ENCODE measurements at regions of chr1 and their contacts with region 1.

Region 1: DNA sequence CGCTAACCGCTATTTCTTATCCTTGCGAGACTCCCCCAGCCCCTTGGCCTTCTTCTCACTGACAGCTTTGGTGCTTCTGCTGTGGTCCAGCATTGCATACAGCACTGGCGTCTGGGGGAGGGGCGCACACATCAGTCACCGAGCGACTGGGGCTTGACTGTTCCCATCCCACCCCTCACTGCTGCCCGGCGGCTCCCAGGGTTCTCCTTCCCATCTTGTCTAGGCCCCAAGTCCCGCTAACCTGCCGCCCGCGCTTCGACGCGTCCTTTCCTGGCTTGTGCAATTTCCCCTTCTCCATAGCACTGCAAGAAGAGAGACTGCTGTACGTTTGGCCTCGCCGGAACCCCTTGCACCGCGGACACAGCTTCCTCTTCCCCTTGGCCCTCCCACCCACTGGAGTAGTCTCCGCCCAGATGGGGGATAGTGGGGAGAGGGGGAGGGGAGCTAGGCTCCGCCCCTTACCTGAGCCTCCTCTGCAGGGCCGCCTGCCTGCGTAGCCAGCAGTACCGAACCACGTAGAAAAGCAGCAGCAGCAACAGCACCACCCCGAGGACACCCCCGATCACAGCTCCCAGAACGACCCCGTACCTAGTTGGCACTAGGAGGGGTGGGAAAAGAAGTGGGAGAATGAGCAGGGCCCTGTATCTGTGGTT is 3.8 kb downstream of the MPZ start:
- DNase-seq: peak; percentile 77 to 96 (median 91)
- ATAC-seq: peak; percentile 95 to 97
- H3K4me3 Mint-ChIP-seq: peak overlapping the region; percentile 92 to 100 (median 98)
- H3K27ac Mint-ChIP-seq: peak overlapping the region; percentile 90 to 99 (median 96)
- H3K4me1 Mint-ChIP-seq: peaks cover 14 to 44% (median 37%) of the 10 kb centered on the region in 4 donors
- H3K27me3 Mint-ChIP-seq: no peaks in the 10 kb centered on the region

Region 2: DNA sequence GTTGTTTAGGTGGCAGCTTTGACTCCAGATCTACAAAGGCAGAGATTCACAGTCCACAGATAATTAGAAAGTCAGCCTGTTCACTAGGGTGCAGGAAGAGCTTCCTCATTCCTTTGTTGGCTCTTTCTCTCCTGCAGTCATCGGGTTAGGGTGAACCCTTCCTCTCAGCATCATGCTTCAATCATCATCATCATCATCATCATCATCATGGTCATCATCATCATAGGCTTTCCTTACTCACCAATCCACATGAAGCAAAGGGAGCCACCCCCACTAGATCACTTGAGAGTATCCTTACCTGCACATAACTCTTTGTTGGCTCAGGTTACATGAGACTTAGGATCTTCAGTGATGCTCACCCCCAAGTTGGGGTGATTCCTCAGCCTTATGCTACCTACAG is 15.2 kb before region 1 on chr1:
- POLR2A ChIA-PET with region 1: interaction called, 15 read pairs
- DNase-seq: no peak
- ATAC-seq: no peak
- H3K4me3 Mint-ChIP-seq: no peak overlapping the region
- H3K27ac Mint-ChIP-seq: peak overlapping the region in 1 of 10 donors; percentile 60
- H3K4me1 Mint-ChIP-seq: peaks cover 2 to 6% (median 4%) of the 10 kb centered on the region in 4 donors
- H3K27me3 Mint-ChIP-seq: no peaks in the 10 kb centered on the region

Region 3: DNA sequence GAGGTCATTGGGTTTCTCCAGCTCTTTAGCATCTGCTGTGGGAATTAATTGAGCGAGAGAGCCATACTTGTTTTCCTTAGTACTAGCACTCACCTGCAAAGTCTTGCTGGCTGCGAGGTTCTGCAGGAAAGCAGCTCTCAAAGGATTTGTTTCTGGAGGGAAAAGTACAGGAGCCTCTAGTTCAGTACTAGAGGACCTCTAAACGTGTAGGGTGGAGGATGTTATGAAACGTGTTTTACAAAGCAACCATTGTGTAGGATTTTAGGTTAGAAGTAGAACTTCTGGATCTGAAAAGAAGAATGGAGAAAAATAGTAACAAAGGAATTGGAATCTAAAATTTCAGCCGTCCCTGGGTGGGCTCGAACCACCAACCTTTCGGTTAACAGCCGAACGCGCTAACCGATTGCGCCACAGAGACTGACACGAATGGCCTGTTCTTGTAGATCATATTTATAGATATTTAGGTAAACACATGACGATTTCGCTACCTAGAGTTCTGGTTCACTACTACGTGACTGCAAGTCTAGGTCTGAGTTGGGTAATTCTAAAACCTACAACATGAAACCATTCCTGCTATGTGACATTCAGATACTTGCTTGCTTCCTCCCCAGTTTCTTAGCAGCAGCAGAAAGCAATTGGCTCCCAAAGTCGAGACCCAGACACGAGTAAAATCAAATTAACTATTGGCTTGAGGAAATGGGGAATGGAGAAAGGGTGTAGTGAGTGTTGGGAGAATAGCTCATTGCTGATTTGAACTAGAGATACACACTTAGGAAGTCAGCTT is 121.9 kb after region 1 on chr1:
- POLR2A ChIA-PET with region 1: no interaction called
- DNase-seq: peak in 6 of 10 donors; percentile 6 to 48 (median 44)
- ATAC-seq: peak in 1 of 2 donors; percentile 82
- H3K4me3 Mint-ChIP-seq: peak overlapping the region in 9 of 10 donors; percentile 19 to 79 (median 45)
- H3K27ac Mint-ChIP-seq: peak overlapping the region in 3 of 10 donors; percentile 38 to 90 (median 87)
- H3K4me1 Mint-ChIP-seq: peaks cover 6 to 12% (median 9%) of the 10 kb centered on the region in 4 donors
- H3K27me3 Mint-ChIP-seq: peaks cover 29 to 63% (median 47%) of the 10 kb centered on the region in 5 donors

Region 4: DNA sequence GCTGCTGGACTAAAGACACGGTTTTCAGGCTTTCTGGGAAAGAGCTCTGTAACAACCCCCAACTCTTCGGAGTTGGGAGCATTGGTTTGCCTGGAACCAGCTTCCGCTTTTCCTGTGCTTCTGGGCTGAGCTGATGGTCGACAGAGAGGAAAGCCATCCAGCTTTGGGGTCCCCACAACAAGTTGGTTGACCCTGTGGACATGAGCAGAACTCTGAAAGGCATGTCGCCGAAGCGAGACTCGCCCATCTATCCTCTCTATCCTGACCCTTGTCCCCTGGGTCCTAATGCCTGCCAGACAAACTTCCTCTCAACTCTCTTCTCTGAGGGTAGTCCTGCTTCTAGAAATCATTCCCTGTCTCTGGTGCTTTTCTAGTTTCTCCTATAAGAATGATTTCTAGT is 167.4 kb after region 1 on chr1:
- POLR2A ChIA-PET with region 1: no interaction called
- DNase-seq: no peak
- ATAC-seq: no peak
- H3K4me3 Mint-ChIP-seq: peak overlapping the region in 8 of 10 donors; percentile 8 to 74 (median 46)
- H3K27ac Mint-ChIP-seq: no peak overlapping the region
- H3K4me1 Mint-ChIP-seq: peaks cover 2 to 12% (median 8%) of the 10 kb centered on the region in 4 donors
- H3K27me3 Mint-ChIP-seq: peaks cover 23 to 57% (median 33%) of the 10 kb centered on the region in 5 donors